Right lobe of liver (tissue), 6 donors: ENCODE measurements at regions of chr15 and their contacts with region 1.

Region 1: DNA sequence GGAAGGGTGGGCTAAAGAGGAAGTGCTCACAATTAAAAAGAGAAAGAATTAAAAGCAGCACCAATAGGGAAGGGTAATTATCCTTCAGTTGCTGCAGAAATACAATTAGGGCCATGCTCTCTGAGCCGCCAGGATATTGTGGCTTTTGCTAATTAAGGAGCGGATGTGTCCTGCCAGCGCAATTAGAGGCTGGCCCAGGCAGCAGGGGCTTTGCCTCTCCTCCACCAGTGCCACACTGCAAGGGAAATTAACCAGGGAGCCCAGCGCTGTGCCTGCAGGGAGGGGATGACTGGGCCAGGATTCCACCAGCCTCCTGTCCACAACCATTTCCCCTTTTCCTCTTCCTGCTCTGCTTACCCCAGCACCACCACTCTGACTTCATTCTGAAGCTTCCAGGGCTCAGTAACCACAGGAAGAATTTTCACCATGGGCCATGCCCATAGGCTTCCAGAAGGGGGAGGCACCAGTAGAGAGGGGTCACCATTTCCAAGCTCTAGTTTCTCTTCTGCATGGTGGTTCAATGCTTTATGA is 10.4 kb upstream of the AEN start:
- DNase-seq: no peak
- ATAC-seq: no peak
- H3K4me3 ChIP-seq: no peak overlapping the region
- H3K27ac ChIP-seq: no peak overlapping the region
- H3K4me1 ChIP-seq: peaks cover 0 to 12% (median 8%) of the 10 kb centered on the region in 4 donors
- H3K27me3 ChIP-seq: peaks cover 0 to 11% of the 10 kb centered on the region in 2 donors
- CTCF ChIP-seq: no peak
- POLR2A ChIP-seq: no peak

Region 2: GRCh38 chr15:88476635-88477060 is 134.1 kb before region 1 on chr15:
- intact Hi-C with region 1: loop called in 1 of 2 experiments (anchors 10 kb)
- DNase-seq: peak; percentile 47 to 82 (median 67)
- ATAC-seq: peak; percentile 98 to 100 (median 99)
- H3K4me3 ChIP-seq: no peak overlapping the region
- H3K27ac ChIP-seq: no peak overlapping the region
- H3K4me1 ChIP-seq: peaks cover 0 to 4% (median 2%) of the 10 kb centered on the region in 4 donors
- H3K27me3 ChIP-seq: no peaks in the 10 kb centered on the region
- CTCF ChIP-seq: peak; percentile 58 to 81 (median 70)
- POLR2A ChIP-seq: no peak

Region 3: DNA sequence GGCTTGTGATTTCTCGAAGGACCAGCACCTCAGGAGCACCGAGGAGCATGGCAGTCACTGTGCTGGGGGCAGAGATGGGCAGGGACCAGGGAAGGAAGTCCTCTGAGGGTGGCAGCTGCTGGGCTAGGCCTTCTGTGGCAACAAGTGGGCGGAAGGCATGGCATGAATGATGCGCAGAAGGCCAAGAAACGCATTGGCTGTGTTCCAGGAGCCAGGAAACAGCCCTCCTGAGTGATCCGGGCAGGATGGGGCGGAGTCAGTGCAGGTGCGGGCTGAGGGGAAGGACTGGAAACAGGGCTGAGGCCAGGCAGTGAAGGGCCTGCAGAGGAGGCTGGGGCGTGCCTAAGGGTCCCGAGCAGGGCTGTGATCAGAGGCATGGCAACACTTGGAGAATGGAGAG is 119.6 kb before region 1 on chr15:
- intact Hi-C with region 1: loop called in 1 of 2 experiments (anchors 10 kb)
- DNase-seq: no peak
- ATAC-seq: no peak
- H3K4me3 ChIP-seq: no peak overlapping the region
- H3K27ac ChIP-seq: no peak overlapping the region
- H3K4me1 ChIP-seq: no peaks in the 10 kb centered on the region
- H3K27me3 ChIP-seq: no peaks in the 10 kb centered on the region
- CTCF ChIP-seq: no peak
- POLR2A ChIP-seq: no peak